ENCODE measurements at regions of chr13 and their contacts with region 1.

Region 1: GRCh38 chr13:80363890-80364503 is 23.1 kb upstream of the SPRY2 start:
- DNase-seq: no peak
- H3K4me3 ChIP-seq: no peak overlapping the region
- CTCF ChIP-seq: peak; percentile 77

Region 2: DNA sequence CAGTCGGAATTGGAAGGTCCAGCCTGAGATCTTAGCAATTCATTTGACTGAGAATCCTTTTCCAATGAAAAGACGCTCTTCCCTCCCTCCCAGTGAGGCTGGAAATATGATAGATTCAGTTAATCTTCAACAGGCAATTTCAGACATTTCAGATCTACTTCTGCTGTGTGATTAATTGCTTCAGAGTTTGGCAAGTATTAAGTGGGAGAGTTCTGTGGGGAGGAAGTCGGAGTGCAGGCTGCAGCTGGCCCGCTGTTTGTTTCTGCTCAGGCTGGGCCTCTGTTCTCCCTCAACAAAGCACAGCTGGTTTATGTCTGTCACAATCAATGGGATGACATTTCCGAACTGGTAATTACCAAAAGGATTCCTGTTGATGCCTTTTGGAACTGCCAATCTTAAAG is 704.9 kb before region 1 on chr13:
- in situ Hi-C with region 1: loop called (anchors 25 kb)
- DNase-seq: no peak
- H3K4me3 ChIP-seq: no peak overlapping the region
- CTCF ChIP-seq: no peak

Measured in astrocyte of the cerebellum (primary cell).